Right lobe of liver (tissue), 6 donors: ENCODE measurements at regions of chr9 and their contacts with region 1.

Region 1: DNA sequence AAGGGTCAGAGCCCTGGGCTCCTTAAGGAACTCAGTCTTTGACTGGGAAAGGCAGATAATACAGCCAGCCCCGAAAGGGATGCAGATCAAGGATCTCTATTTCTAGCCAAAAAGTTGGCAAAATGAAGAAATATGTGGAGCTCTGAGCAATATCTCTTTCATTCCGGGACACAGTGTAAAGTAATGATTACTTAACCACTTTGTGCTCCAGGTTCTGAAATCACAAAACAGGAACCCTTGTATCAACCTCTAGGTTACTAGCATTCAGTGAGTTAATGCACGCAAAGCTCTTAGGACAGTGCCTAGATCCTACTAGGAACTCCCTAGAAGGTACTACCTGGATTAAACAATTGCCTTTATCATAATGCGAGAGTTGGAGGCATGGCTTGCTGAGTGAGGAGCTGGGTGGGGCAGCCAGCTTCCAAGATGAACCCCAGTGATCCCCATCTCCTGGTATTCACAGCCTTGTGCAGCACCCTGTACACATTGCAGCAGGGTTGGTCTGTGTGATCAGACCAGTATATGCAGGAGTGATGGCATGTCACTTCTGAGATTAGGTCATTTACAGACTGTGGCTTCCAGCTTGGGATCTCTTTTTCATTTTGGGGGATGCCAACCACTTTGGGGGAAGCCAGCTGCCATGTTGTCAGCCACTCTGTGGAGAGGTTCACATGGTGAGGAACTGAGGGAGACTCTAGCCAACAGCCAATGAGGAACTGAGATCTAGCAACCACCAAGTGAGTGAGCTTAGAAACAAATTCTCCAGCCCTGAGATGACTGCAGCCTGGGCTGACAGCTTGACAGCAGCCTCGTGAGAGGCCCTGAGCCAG is 103.1 kb upstream of the SLC44A1 start:
- DNase-seq: no peak
- ATAC-seq: peak; percentile 48 to 76 (median 56)
- H3K4me3 ChIP-seq: no peak overlapping the region
- H3K27ac ChIP-seq: no peak overlapping the region
- H3K4me1 ChIP-seq: no peaks in the 10 kb centered on the region
- H3K27me3 ChIP-seq: no peaks in the 10 kb centered on the region
- CTCF ChIP-seq: no peak
- POLR2A ChIP-seq: no peak

Region 2: DNA sequence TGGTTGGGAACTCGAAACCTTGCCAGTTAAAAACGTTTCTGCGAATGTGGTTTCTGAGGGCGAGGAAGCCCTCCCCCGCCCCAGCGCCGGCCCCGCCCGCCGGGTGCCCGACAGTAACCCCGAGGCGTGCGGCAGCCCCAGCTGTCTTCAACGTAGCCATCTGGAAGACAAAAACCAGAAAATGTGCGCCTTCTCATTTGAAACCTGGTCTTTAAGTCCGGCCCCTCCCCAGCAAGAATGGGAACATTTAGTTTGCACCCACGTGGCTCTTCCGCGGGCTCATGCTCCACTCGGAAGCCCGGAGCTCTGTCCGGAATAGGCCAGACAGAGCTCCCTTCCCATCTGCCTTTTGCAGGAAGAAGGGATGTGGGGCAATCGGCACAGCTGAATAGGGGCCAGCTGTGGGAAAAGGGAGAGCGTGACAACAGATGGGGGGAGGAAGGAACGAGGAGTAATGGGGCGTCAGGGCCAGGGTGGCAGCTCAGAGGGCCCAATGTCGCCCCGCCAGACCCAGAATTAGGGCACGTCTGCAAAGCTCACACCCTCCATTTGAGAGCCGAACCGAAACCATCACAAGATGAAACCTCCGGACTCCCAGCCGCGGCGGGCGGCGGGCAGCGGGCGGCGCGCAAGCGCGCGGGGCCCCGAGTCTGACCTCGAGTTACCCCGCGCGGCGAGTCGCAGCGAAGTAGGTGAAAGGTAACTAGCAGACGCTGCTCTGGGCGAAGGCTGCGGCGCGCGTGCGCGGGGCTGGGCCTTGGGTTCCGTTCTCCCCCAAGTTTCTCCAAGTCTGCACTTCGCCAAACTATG is 150.0 kb before region 1 on chr9:
- intact Hi-C with region 1: loop called in 1 of 2 experiments (anchors 10 kb)
- DNase-seq: peak; percentile 94 to 96 (median 96)
- ATAC-seq: peak; percentile 87 to 94 (median 92)
- H3K4me3 ChIP-seq: peak overlapping the region; percentile 73 to 78 (median 77)
- H3K27ac ChIP-seq: peak overlapping the region; percentile 90 to 96 (median 92)
- H3K4me1 ChIP-seq: peaks cover 0 to 14% (median 8%) of the 10 kb centered on the region in 4 donors
- H3K27me3 ChIP-seq: no peaks in the 10 kb centered on the region
- CTCF ChIP-seq: no peak
- POLR2A ChIP-seq: peak; percentile 69